T-cell (primary cell): ENCODE measurements at regions of chr9 and their contacts with region 1.

Region 1: GRCh38 chr9:7791394-7791793 is 8.2 kb downstream of the DMAC1 start:
- DNase-seq: no peak
- ATAC-seq: no peak
- H3K4me3 ChIP-seq: no peak overlapping the region
- H3K4me3 Mint-ChIP-seq: no peak overlapping the region
- H3K27ac ChIP-seq: no peak overlapping the region
- H3K27ac Mint-ChIP-seq: no peak overlapping the region
- H3K4me1 ChIP-seq: peaks cover 0 to 3% of the 10 kb centered on the region in 2 experiments
- H3K4me1 Mint-ChIP-seq: peaks cover 22 to 34% (median 33%) of the 10 kb centered on the region in 3 donors
- H3K27me3 ChIP-seq: no peaks in the 10 kb centered on the region
- H3K27me3 Mint-ChIP-seq: no peaks in the 10 kb centered on the region

Region 2: DNA sequence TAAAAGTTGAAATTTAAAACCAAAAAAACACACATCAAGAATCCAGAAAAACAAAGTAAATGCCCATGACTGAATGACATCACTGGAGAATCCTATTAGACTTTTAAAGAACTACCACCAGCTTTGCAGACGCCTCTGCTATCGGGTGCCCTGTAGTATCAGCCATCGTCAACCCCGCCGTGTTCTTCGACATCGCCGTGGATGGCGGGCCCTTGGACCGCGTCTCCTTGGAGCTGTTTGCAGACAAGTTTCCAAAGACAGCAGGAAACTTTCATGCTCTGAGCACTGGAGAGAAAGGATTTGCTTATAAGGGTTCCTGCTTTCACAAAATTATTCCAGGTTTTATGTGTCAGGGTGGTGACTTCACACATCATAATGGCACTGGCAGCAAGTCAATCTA is 193.7 kb before region 1 on chr9:
- CTCF ChIA-PET with region 1: interaction called in 1 of 2 experiments, 10 read pairs
- POLR2A ChIA-PET with region 1: no interaction called
- DNase-seq: no peak
- ATAC-seq: no peak
- H3K4me3 ChIP-seq: no peak overlapping the region
- H3K4me3 Mint-ChIP-seq: no peak overlapping the region
- H3K27ac ChIP-seq: no peak overlapping the region
- H3K27ac Mint-ChIP-seq: no peak overlapping the region
- H3K4me1 ChIP-seq: no peaks in the 10 kb centered on the region
- H3K4me1 Mint-ChIP-seq: peaks cover 0 to 1% (median 0%) of the 10 kb centered on the region in 3 donors
- H3K27me3 ChIP-seq: no peaks in the 10 kb centered on the region
- H3K27me3 Mint-ChIP-seq: no peaks in the 10 kb centered on the region